AG04449 (cell line): ENCODE measurements at regions of chr3 and their contacts with region 1.

Region 1: DNA sequence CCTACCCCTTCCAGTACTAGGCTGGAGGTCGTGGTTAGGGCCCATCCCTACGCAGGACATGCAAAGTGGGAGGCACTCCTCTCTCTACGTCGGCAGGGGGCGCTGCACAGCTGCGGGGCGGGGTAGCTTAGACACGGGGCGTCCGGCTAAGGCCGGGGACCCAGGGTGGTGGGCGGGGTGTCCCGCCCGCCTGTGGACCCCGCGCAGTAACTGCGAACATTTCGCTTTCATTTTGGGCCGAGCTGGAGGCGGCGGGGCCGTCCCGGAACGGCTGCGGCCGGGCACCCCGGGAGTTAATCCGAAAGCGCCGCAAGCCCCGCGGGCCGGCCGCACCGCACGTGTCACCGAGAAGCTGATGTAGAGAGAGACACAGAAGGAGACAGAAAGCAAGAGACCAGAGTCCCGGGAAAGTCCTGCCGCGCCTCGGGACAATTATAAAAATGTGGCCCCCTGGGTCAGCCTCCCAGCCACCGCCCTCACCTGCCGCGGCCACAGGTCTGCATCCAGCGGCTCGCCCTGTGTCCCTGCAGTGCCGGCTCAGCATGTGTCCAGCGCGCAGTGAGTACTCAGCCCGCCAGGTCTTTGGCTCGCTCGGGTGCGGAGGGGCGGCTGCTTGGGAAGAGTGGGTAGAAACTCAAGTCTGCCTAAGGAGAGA is at the start of gene IL12A:
- DNase-seq: no peak
- H3K4me3 ChIP-seq: peak within 1 kb of the TSS; percentile 66
- CTCF ChIP-seq: peak; percentile 98

Region 2: DNA sequence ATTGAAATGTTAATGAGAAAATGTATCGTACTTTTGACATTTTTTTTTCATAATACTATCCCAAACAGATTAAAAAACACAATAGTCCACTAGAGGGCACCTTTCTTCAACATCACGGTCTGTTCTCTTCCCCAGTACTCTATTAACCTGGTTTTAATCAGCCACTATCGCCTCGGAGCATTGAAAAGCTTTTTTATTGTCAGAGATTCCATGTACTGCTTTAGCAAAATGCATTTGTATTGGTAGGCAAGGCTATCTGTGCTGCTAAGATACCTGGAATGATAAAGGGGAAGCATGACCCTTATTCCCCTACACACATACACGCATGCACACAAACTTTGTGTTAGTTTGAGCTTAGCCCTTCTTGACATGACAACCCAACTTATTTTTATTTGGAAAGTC is 160.2 kb before region 1 on chr3:
- CTCF ChIA-PET with region 1: interaction called, 18 read pairs
- POLR2A ChIA-PET with region 1: no interaction called
- DNase-seq: no peak
- H3K4me3 ChIP-seq: no peak overlapping the region
- CTCF ChIP-seq: peak; percentile 33

Region 3: GRCh38 chr3:159872374-159873109 is 116.2 kb before region 1 on chr3:
- CTCF ChIA-PET with region 1: interaction called, 24 read pairs
- POLR2A ChIA-PET with region 1: no interaction called
- DNase-seq: peak; percentile 66
- H3K4me3 ChIP-seq: no peak overlapping the region
- CTCF ChIP-seq: peak; percentile 19

Region 4: DNA sequence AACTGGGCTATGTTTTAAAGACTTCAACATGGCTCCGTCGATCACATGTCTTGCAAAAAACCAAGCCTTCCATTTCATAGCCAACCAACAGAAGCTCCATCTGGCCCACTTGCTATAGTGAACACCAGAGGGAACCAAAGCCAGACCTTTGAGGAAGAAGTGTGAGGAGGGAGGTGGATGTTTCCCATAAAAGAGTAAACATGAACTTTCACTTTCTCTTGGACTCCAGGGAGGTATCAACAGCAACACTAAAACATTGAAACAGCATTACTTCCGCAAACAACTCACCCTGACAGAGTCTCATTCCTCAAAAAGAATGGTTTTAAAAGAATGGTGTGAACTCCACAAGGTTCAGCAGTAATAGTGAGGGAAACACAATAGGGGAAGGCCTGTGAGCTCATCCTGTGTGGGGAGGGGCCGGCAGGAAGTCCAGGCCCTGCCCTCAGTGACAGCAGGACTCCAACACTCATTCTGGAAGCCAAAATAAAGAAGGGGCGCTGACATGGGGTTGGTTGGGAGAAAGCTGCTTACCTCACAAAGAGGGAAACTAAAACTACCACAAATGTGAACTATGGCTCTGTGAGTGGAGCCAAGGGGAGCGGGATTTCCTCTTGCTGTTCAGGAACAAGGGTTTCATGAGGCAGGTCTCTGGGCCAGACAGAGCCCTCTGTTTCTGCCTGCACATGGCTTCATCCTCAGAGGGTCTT is 59.2 kb before region 1 on chr3:
- CTCF ChIA-PET with region 1: interaction called, 92 read pairs
- POLR2A ChIA-PET with region 1: no interaction called
- DNase-seq: peak; percentile 59
- H3K4me3 ChIP-seq: no peak overlapping the region
- CTCF ChIP-seq: peak; percentile 59

Region 5: GRCh38 chr3:159953325-159954085 is 35.2 kb before region 1 on chr3:
- CTCF ChIA-PET with region 1: interaction called, 42 read pairs
- POLR2A ChIA-PET with region 1: no interaction called
- DNase-seq: no peak
- H3K4me3 ChIP-seq: no peak overlapping the region
- CTCF ChIP-seq: no peak

Region 6: DNA sequence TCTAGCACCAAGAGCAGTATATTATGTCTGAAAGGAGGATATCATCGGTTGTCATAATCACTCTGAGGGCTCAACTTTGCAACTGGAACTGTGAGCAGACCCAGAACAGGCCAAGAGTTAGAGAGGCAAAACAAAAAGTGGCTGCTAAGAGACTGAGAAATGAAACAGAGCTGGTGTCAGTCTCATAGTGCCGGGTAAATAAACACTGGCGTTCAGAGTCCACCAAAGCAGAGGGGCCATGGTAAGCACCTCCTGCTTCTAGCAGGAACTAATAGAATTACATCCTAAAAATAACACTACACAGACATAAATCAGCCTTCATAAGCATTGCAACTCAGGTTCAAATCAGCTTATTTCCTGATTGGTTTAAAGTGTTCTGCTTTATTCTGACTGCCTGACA is 10.4 kb before region 1 on chr3:
- CTCF ChIA-PET with region 1: interaction called, 126 read pairs
- POLR2A ChIA-PET with region 1: no interaction called
- DNase-seq: no peak
- H3K4me3 ChIP-seq: no peak overlapping the region
- CTCF ChIP-seq: no peak